ENCODE measurements at regions of chr13 and their contacts with region 1.

Region 1: GRCh38 chr13:23888658-23889614 is at the start of gene MIPEP:
- DNase-seq: peak; percentile 96

Region 2: GRCh38 chr13:23488458-23488857 is 400.5 kb before region 1 on chr13:
- in situ Hi-C with region 1: loop called (anchors 25 kb)
- DNase-seq: no peak

Region 3: DNA sequence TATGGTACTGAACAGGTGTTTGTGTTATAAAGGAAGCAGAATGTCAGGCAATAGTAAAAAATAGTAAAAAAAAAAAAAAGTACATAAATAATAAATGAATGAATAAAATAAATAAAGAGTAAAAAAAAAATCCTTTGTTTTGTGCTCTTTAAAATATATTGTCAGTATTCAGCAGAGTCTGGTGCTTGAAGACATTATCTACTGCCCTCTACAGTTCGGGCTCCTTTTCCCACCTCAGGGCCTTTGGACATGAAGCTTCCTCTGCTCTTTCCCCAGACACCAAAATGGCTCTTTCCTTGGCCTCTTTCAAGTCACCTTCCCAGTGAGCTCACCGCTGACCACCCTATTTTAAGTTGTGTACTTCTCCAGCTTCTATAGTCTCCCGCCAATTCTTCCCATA is 181.3 kb before region 1 on chr13:
- in situ Hi-C with region 1: no loop called
- DNase-seq: no peak